ENCODE measurements at regions of chr11 and their contacts with region 1.

Region 1: GRCh38 chr11:130002846-130003716 is 446 bp upstream of the PRDM10 start:
- DNase-seq: peak; percentile 98
- H3K4me3 ChIP-seq: peak overlapping the region; percentile 55 to 96 (median 92)
- H3K27ac ChIP-seq: peak overlapping the region; percentile 97 to 99 (median 98)
- H3K4me1 ChIP-seq: peaks cover 0 to 27% (median 22%) of the 10 kb centered on the region in 4 donors
- H3K27me3 ChIP-seq: no peaks in the 10 kb centered on the region
- CTCF ChIP-seq: no peak
- EP300 ChIP-seq: no peak
- POLR2A ChIP-seq: peak; percentile 33 to 69

Region 2: GRCh38 chr11:129895126-129896041 is 107.7 kb before region 1 on chr11 and contains the start of gene NFRKB:
- intact Hi-C with region 1: loop called (anchors 10 kb)
- DNase-seq: peak; percentile 90
- H3K4me3 ChIP-seq: peak within 1 kb of the TSS; percentile 79 to 95 (median 91)
- H3K27ac ChIP-seq: peak within 1 kb of the TSS; percentile 78 to 87 (median 84)
- H3K4me1 ChIP-seq: peaks cover 0 to 21% (median 16%) of the 10 kb centered on the region in 4 donors
- H3K27me3 ChIP-seq: no peaks in the 10 kb centered on the region
- CTCF ChIP-seq: no peak
- EP300 ChIP-seq: no peak
- POLR2A ChIP-seq: peak in 1 of 2 donors; percentile 49
- total RNA-seq, gene NFRKB: 20.7 to 24.7 (median 22.6) TPM

Region 3: GRCh38 chr11:129922674-129923073 is 80.4 kb before region 1 on chr11:
- intact Hi-C with region 1: loop called (anchors 5 kb)
- DNase-seq: no peak
- H3K4me3 ChIP-seq: no peak overlapping the region
- H3K27ac ChIP-seq: no peak overlapping the region
- H3K4me1 ChIP-seq: no peaks in the 10 kb centered on the region
- H3K27me3 ChIP-seq: no peaks in the 10 kb centered on the region
- CTCF ChIP-seq: no peak
- EP300 ChIP-seq: no peak
- POLR2A ChIP-seq: no peak

Region 4: DNA sequence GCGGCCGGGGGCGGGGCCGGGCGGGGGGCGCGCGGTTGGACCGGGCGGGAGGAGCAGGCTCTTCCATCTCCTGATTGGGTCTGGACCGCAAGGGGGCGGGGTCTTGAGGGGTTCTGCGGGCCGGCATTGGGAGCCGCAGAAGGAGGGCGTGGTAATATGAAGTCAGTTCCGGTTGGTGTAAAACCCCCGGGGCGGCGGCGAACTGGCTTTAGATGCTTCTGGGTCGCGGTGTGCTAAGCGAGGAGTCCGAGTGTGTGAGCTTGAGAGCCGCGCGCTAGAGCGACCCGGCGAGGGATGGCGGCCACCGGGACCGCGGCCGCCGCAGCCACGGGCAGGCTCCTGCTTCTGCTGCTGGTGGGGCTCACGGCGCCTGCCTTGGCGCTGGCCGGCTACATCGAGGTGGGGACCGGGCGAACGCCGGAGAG is 66.6 kb after region 1 on chr11 and contains the start of gene APLP2:
- intact Hi-C with region 1: loop called (anchors 1 kb)
- DNase-seq: peak; percentile 100
- H3K4me3 ChIP-seq: peak within 1 kb of the TSS; percentile 78 to 96 (median 86)
- H3K27ac ChIP-seq: peak within 1 kb of the TSS; percentile 94 to 99 (median 97)
- H3K4me1 ChIP-seq: peaks cover 0 to 27% (median 17%) of the 10 kb centered on the region in 4 donors
- H3K27me3 ChIP-seq: no peaks in the 10 kb centered on the region
- CTCF ChIP-seq: no peak
- EP300 ChIP-seq: no peak
- POLR2A ChIP-seq: peak; percentile 71 to 83
- total RNA-seq, gene APLP2: 247 to 276 (median 256) TPM

Region 5: DNA sequence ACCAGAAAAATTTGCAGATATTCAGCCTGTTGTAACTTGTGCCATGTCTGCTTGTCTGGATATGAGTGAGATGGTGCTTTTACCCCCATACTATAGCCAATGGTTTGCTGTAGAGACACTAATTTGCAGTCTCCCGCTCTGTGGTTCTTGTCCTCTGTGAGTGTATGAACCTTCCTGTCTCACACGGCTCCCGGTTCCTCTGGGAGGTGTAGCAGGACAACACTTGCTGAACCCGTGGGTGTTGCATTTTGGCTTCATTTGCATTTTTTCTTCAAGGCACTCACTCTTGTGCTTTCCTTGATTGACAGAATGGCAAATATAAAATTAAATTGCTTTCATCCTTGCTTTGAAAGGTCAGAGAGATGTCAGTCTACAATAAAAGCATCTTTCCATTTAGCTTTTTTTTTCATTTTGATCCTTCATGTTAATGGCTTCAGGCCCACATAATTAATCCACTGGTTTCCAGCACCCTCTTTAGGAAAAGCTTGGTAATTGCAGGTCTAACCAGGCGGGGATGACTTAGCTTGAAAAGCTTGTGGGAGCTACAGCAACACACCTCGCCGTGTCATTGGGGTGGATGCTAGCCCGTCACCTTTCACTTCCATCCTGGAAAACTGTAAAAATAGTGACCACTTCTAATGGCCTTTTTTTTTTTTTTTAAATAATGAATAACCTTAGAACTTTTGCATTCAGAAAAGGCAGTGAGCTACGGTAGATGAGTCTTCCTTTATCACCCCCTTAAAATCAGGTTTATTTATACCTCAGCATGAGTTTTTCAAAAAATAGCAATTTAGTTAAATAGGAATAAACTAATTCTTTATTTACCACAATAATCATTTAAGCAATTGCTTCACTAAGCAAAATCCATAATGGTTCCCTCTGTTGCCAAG is 129.1 kb after region 1 on chr11:
- intact Hi-C with region 1: loop called (anchors 5 kb)
- DNase-seq: no peak
- H3K4me3 ChIP-seq: no peak overlapping the region
- H3K27ac ChIP-seq: no peak overlapping the region
- H3K4me1 ChIP-seq: peaks cover 0 to 9% (median 0%) of the 10 kb centered on the region in 4 donors
- H3K27me3 ChIP-seq: no peaks in the 10 kb centered on the region
- CTCF ChIP-seq: peak; percentile 47 to 83 (median 79)
- EP300 ChIP-seq: no peak
- POLR2A ChIP-seq: no peak

Region 6: DNA sequence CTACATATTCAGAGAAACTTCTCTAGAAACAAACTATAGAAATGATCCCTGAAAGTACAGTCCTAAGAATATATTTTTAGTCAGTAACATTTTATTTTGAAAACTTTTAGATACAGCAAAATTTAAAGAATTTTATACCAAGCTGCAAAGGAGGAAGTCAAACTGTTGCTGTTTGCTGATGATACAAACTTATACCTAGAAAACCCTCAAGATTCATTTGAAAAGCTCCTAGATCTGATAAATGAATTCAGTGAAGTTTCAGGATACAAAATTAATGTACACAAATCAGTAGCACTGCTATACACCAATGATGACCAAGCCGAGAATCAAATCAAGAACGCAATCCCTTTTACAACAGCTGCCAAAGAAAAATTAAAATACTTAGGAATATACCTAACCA is 301.6 kb after region 1 on chr11:
- intact Hi-C with region 1: no loop called
- DNase-seq: no peak
- H3K4me3 ChIP-seq: no peak overlapping the region
- H3K27ac ChIP-seq: no peak overlapping the region
- H3K4me1 ChIP-seq: peaks cover 0 to 30% (median 16%) of the 10 kb centered on the region in 4 donors
- H3K27me3 ChIP-seq: no peaks in the 10 kb centered on the region
- CTCF ChIP-seq: no peak
- EP300 ChIP-seq: no peak
- POLR2A ChIP-seq: no peak

Region 7: GRCh38 chr11:130314750-130315285 is 311.7 kb after region 1 on chr11 and contains the start of gene ZBTB44:
- intact Hi-C with region 1: loop called (anchors 10 kb)
- DNase-seq: peak; percentile 96
- H3K4me3 ChIP-seq: peak within 1 kb of the TSS; percentile 67 to 92 (median 72)
- H3K27ac ChIP-seq: peak within 1 kb of the TSS; percentile 86 to 96 (median 93)
- H3K4me1 ChIP-seq: peaks cover 0 to 42% (median 35%) of the 10 kb centered on the region in 4 donors
- H3K27me3 ChIP-seq: no peaks in the 10 kb centered on the region
- CTCF ChIP-seq: no peak
- EP300 ChIP-seq: no peak
- POLR2A ChIP-seq: peak; percentile 10 to 25
- total RNA-seq, gene ZBTB44: 73.0 to 162 (median 117) TPM

Measured in sigmoid colon (tissue), 7 donors.